Astrocyte of the spinal cord (primary cell): ENCODE measurements at regions of chr1 and their contacts with region 1.

Region 1: DNA sequence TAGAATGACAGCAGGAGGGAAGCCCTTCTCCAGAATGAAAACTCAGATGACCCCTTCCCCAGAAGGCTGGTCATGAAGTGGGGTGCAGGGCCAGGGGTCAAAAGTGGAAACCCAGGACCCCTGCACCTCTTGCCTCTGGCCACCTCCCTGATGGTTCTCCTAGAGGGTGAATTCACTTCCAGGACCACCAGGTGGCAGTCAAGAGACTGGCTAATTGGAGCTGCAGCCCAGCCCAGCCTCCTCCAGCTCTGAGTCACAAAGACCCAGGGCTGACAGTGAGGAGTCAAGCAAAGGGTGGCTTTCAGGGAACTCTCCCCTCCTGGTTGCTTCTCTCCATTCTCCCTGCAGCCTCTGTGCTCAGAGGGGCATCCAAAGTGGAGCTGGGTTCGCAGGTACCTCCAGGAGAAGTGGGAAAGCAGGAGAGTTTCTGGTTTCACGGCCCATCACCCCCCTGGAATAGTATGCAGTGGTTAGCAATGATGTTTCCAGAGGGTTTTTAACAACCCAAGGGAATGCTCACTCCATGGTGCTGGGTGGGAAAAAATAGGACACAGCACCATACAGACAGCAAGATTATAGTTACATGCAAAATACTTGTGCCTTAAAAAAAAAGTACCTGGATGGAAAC is 6.1 kb upstream of the EPHB2 start:
- DNase-seq: peak; percentile 79
- H3K4me3 ChIP-seq: no peak overlapping the region
- CTCF ChIP-seq: peak; percentile 89

Region 2: GRCh38 chr1:22889213-22889827 is 184.8 kb after region 1 on chr1:
- in situ Hi-C with region 1: loop called (anchors 25 kb)
- DNase-seq: peak; percentile 57
- H3K4me3 ChIP-seq: no peak overlapping the region
- CTCF ChIP-seq: peak; percentile 90